A673 (cell line): ENCODE measurements at regions of chr17 and their contacts with region 1.

Region 1: DNA sequence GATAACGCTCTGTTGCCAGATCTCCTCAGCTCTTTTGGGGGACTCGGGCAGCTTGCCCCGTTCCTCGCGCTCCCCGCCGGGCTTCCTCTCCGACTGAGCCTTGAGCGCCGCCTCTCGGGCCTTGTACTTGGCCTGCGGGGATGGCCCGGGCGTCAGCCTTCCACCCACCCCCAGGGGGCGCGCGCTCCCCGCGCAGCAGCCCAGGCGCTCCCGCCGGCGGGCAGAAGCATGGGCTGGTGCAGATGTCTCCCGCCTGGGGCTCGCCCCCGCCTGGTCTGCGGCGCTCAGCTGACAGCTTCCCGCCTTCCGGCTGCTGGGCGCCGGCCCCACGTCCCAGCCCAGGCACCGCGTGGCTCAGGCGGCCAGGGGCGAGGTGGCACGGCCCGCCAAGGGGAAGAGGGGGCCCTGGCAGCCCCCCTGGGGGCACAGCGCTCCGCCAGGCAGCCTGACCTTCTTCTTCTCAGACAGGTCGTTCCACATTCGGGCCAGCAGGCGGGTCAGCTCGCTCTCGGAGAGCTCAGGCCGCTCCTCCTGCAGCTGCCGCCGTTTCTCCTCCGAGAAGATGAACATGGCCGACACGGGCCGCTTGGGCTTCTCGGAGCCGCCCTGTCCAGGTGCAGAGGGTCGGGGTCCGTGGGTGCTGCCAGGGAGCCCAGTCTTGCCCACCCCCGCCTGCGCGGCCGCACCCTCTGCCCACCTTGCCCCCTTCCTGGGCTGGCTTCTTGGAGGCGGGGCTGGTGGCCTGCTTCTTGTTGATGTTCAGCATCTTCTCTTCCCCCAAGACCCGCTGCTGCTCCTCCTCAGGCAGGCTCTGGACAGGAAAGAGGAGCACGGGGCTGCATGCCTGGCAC is 8.9 kb downstream of the UBTF start:
- DNase-seq: peak; percentile 84
- H3K4me3 ChIP-seq: no peak overlapping the region
- H3K27ac ChIP-seq: no peak overlapping the region
- H3K4me1 ChIP-seq: no peaks in the 10 kb centered on the region
- H3K27me3 ChIP-seq: no peaks in the 10 kb centered on the region
- CTCF ChIP-seq: peak; percentile 82

Region 2: GRCh38 chr17:42953669-42954068 is 1256.9 kb before region 1 on chr17:
- CTCF ChIA-PET with region 1: no interaction called
- POLR2A ChIA-PET with region 1: no interaction called
- intact Hi-C with region 1: no loop called
- DNase-seq: no peak
- H3K4me3 ChIP-seq: no peak overlapping the region
- H3K27ac ChIP-seq: no peak overlapping the region
- H3K4me1 ChIP-seq: no peaks in the 10 kb centered on the region
- H3K27me3 ChIP-seq: no peaks in the 10 kb centered on the region
- CTCF ChIP-seq: no peak

Region 3: DNA sequence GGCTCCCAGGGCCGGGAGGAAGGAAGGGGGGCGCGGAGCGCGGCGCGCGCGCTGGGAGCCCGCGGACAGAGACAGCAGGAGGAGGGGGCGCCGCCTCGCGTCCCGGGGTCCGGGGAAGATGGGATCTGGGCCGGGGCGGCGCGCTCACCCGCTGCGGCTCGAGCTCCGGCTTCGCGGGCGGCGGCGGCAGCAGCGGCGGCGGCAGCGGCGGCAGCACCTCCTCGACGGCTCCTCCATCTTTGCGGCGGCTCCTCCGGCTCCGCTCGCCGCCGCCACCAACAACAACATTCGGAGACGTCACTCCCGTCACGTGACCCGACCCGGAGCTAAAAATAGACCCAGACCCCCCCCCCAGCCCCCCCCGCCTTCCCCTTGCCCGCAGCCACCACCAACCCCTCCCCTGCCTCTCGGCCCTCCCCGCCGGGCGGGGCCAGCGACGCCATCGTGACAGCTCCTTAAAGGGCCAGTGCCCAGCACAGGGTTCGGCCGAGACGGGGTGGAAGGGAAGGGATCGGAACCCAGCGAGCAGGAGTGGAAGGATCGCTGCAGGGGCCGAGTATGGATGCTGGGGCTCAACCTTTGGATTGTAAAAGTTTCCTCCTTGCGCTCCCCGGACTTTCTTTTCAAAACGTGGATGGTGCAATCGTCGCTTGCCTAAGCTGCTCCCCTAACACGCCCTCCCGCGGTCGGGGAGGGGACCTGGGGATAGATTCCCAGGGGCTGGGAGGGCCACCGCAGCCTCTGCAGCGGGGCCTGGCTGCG is 87.0 kb before region 1 on chr17 and contains the start of gene HDAC5:
- CTCF ChIA-PET with region 1: no interaction called
- POLR2A ChIA-PET with region 1: no interaction called
- intact Hi-C with region 1: no loop called
- DNase-seq: peak; percentile 91
- H3K4me3 ChIP-seq: peak within 1 kb of the TSS; percentile 64
- H3K27ac ChIP-seq: peak within 1 kb of the TSS; percentile 87
- H3K4me1 ChIP-seq: no peaks in the 10 kb centered on the region
- H3K27me3 ChIP-seq: no peaks in the 10 kb centered on the region
- CTCF ChIP-seq: peak; percentile 54
- total RNA-seq, gene HDAC5: 16.9 and 27.1 TPM in 2 replicates

Region 4: DNA sequence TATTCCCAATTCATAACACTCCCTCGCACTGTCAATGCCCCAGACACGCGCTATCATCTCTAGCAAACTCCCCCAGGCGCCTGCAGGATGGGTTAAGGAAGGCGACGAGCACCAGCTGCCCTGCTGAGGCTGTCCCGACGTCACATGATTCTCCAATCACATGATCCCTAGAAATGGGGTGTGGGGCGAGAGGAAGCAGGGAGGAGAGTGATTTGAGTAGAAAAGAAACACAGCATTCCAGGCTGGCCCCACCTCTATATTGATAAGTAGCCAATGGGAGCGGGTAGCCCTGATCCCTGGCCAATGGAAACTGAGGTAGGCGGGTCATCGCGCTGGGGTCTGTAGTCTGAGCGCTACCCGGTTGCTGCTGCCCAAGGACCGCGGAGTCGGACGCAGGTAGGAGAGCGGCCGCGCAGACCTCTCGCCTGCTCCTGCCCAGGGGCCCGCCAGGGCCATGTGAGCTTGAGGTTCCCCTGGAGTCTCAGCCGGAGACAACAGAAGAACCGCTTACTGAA is 134.4 kb after region 1 on chr17 and contains the start of gene GRN:
- CTCF ChIA-PET with region 1: interaction called, 3 read pairs
- POLR2A ChIA-PET with region 1: no interaction called
- intact Hi-C with region 1: loop called (anchors 5 kb)
- DNase-seq: peak; percentile 96
- H3K4me3 ChIP-seq: peak within 1 kb of the TSS; percentile 64
- H3K27ac ChIP-seq: peak within 1 kb of the TSS; percentile 51
- H3K4me1 ChIP-seq: no peaks in the 10 kb centered on the region
- H3K27me3 ChIP-seq: no peaks in the 10 kb centered on the region
- CTCF ChIP-seq: no peak
- total RNA-seq, gene GRN: 50.4 and 52.0 TPM in 2 replicates